Activated CD4-positive, alpha-beta T cell treated with anti-CD3 and anti-CD28 coated beads for 36 hours (primary cell): ENCODE measurements at regions of chr19 and their contacts with region 1.

Region 1: GRCh38 chr19:16111160-16111908 is at the start of gene RAB8A:
- DNase-seq: peak; percentile 99
- ATAC-seq: peak; percentile 96
- H3K4me3 Mint-ChIP-seq: peak within 1 kb of the TSS; percentile 96
- H3K27ac Mint-ChIP-seq: peak within 1 kb of the TSS; percentile 97
- H3K4me1 Mint-ChIP-seq: peaks cover 39% of the 10 kb centered on the region
- H3K27me3 Mint-ChIP-seq: no peaks in the 10 kb centered on the region
- total RNA-seq, gene RAB8A: 165 to 218 TPM

Region 2: DNA sequence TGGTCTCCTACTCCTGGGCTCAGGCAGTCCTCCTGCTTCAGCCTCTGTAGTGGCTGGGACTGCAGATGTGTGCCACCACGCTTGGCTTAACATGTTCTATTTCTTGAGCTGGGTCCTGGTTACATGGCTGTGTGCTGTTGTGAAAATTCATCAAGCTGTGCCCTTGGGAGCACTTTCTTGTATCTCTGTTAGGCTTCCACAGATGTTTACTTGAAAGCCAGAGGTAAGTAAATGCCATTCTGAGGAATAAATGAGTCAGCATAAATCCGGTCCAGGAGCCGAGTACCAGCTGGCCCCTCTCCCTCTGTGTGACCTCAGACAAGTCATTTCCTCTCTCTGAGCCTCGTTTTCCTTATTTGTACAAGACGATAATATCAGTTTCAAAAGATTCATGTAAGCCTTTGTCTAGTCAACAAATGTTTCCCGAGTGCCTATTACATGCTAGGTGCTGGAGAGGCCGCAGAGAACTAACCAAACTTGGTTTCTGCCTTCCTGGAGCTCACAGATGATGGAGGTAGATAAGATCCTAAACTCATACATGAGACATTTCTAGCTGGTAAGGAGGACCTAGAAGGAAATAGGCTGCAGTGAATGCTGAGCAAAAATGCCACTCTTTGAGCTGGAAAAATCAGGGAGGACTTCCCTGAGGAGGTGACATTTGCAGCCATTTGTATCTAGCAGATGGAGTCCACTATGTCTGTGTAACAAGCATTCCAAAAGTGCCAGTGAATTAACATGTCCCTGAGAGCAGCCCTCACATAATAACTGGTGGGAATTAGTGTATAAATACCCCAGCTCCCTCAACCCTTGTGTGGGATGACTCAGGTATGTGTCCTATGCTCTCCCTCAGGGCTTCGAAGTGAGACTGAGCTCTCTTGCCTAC is 644.2 kb before region 1 on chr19:
- CTCF ChIA-PET with region 1: no interaction called
- POLR2A ChIA-PET with region 1: interaction called, 10 read pairs
- intact Hi-C with region 1: no loop called
- DNase-seq: peak; percentile 80
- ATAC-seq: peak; percentile 62
- H3K4me3 Mint-ChIP-seq: peak overlapping the region; percentile 47
- H3K27ac Mint-ChIP-seq: peak overlapping the region; percentile 95
- H3K4me1 Mint-ChIP-seq: peaks cover 62% of the 10 kb centered on the region
- H3K27me3 Mint-ChIP-seq: peaks cover 3% of the 10 kb centered on the region

Region 3: DNA sequence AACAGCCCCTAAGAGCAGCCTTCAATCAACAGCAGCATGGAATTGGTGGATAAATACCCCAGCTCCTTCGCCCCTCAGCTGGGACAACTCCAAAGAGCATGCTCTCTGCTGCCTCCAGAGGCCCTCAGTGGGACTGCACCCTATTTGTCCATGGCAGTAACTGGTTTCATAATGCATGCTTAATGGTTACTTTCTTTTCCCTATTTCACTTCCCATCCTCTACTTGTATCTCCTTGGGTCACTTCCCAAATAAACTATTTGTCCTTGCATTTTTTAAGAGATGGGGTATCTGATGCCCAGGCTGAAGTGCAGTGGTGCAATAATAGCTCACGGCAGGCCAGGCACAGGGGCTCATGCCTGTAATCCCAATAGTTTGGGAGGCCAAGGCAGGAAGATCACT is 48.5 kb before region 1 on chr19:
- CTCF ChIA-PET with region 1: interaction called, 13 read pairs
- POLR2A ChIA-PET with region 1: no interaction called
- intact Hi-C with region 1: loop called in 1 of 2 experiments (anchors 1 kb)
- DNase-seq: peak; percentile 84
- ATAC-seq: peak; percentile 38
- H3K4me3 Mint-ChIP-seq: no peak overlapping the region
- H3K27ac Mint-ChIP-seq: no peak overlapping the region
- H3K4me1 Mint-ChIP-seq: peaks cover 24% of the 10 kb centered on the region
- H3K27me3 Mint-ChIP-seq: no peaks in the 10 kb centered on the region

Region 4: GRCh38 chr19:16095071-16095571 is 16.2 kb before region 1 on chr19:
- CTCF ChIA-PET with region 1: interaction called, 7 read pairs
- POLR2A ChIA-PET with region 1: interaction called, 5 read pairs
- intact Hi-C with region 1: loop called in 1 of 2 experiments (anchors 2 kb)
- DNase-seq: peak; percentile 57
- ATAC-seq: peak; percentile 77
- H3K4me3 Mint-ChIP-seq: peak overlapping the region; percentile 10
- H3K27ac Mint-ChIP-seq: peak overlapping the region; percentile 87
- H3K4me1 Mint-ChIP-seq: peaks cover 32% of the 10 kb centered on the region
- H3K27me3 Mint-ChIP-seq: no peaks in the 10 kb centered on the region

Region 5: DNA sequence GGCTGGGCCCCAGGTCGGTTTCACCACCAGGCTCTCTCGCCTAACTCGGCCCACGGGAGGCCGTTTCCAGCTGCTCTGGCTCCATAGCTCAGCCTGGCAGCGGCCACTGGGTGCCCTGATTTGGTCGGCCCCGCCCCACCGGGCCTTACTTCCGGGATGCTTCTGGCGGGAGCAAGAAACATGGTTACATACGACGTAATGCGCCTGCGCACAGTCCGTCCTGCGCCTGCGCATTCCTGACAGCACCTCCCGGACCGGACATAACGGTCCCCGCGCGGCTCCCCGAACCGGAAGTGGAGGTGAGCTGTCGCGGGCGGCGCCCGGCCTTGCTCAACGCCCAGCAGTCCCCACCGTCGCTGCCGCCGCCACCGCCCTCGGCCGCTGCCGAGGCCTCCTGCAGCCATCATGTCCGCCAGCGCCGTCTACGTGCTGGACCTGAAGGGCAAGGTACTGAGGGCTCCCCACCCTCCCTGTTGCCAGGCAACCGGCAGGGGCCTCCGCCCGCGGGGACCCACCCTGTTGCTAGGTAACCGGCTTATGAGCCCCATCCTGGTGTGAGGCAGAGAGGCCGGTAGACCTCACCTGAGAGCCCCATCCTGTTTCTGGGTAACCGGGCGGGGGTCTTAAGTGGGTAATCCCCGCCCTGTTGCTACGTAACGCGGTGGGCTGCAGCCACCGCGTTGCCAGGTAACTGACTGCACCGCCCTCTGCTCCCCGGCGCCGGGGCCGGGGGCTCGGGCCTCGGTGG is 86.5 kb after region 1 on chr19 and contains the start of gene AP1M1:
- CTCF ChIA-PET with region 1: interaction called, 3 read pairs
- POLR2A ChIA-PET with region 1: interaction called, 3 read pairs
- intact Hi-C with region 1: loop called in 1 of 2 experiments (anchors 1 kb)
- DNase-seq: peak; percentile 99
- ATAC-seq: peak; percentile 95
- H3K4me3 Mint-ChIP-seq: peak within 1 kb of the TSS; percentile 83
- H3K27ac Mint-ChIP-seq: peak within 1 kb of the TSS; percentile 96
- H3K4me1 Mint-ChIP-seq: peaks cover 33% of the 10 kb centered on the region
- H3K27me3 Mint-ChIP-seq: no peaks in the 10 kb centered on the region
- total RNA-seq, gene AP1M1: 61.8 to 92.0 TPM

Region 6: GRCh38 chr19:16542045-16542909 is 430.9 kb after region 1 on chr19 and contains the start of gene CHERP:
- CTCF ChIA-PET with region 1: no interaction called
- POLR2A ChIA-PET with region 1: no interaction called
- intact Hi-C with region 1: loop called in 1 of 2 experiments (anchors 1 kb)
- DNase-seq: peak; percentile 97
- ATAC-seq: peak; percentile 85
- H3K4me3 Mint-ChIP-seq: peak within 1 kb of the TSS; percentile 98
- H3K27ac Mint-ChIP-seq: peak within 1 kb of the TSS; percentile 94
- H3K4me1 Mint-ChIP-seq: peaks cover 63% of the 10 kb centered on the region
- H3K27me3 Mint-ChIP-seq: no peaks in the 10 kb centered on the region
- total RNA-seq, gene CHERP: 57.9 to 64.8 TPM